ENCODE measurements at regions of chr18 and their contacts with region 1.

Region 1: DNA sequence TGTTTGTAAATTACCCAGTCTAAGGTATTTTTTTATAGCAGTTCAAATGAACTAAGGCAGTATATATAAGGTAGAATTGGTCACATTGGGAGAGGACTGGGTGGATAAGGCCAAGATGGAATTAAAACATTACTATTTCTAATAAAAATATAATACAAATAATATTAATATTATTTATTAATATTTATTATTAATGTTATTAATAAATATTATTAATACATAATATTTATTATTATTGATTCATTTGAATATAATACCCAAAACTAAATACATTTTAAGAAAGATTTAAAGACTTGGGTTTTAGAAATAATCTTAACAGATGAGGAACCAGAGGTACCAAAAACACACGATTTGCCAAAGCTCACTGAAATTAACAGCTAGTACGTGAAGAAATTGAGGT is 30.5 kb upstream of the MC2R start:
- DNase-seq: no peak
- H3K4me3 ChIP-seq: no peak overlapping the region
- H3K27ac ChIP-seq: no peak overlapping the region
- H3K4me1 ChIP-seq: no peaks in the 10 kb centered on the region
- H3K27me3 ChIP-seq: no peaks in the 10 kb centered on the region
- CTCF ChIP-seq: no peak
- EP300 ChIP-seq: no peak
- POLR2A ChIP-seq: no peak

Region 2: DNA sequence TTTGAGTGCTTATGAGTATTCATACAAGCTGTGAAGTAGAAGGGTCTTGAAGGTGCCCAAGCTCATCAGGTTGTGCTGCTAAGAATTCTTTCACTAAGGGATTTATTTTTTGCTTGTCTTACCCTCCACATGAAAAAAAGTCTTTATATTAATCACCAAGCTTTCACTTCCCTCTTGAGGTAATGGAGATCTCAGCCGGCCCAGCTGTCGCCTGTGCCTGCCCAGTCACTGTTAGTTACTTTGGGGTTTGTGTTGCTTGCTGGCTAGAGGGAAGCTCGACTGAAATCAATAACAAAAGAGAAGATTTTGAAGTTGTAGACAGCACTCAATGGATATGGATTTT is 52.4 kb before region 1 on chr18:
- intact Hi-C with region 1: loop called in 1 of 4 experiments (anchors 10 kb)
- DNase-seq: no peak
- H3K4me3 ChIP-seq: no peak overlapping the region
- H3K27ac ChIP-seq: no peak overlapping the region
- H3K4me1 ChIP-seq: no peaks in the 10 kb centered on the region
- H3K27me3 ChIP-seq: no peaks in the 10 kb centered on the region
- CTCF ChIP-seq: no peak
- EP300 ChIP-seq: no peak
- POLR2A ChIP-seq: no peak

Measured in ovary (tissue), 10 donors.